ENCODE measurements at regions of chr22 and their contacts with region 1.

Region 1: DNA sequence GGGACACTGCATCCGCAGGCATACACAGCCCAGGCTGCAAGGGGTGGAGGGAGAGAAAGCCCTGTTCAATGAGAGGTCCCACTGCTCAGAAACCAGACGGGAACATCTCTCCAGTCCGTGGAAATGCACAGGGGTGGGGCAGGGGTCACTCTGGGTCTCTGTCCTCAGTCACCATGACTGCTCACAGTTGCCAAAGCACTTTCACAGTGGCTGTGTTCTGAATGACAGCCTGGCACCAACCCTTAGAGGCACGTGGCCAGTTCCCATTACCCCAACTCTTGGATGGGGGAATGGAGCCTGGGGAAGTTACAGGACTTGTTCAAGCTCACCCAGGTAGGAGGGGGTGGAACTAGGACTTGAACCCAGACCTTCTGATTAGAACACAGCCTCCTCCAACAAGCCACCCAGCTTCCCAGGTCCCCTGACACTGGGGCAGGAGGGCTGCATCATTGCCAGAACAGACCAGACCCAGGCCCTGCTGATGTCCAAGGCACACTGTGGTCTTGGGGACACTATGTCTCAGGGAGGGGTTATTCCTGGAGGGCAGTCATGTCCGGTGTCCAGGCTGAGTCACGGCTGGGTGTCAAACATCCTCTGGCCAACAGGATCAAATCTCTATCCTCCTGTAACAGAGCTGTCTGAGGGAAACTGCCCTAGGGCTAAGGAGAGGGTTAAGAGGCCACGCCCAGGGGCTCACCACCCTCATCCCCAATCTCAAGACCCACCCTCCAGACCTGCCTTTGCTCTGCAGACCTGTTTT is 8.2 kb downstream of the ZNF70 start:
- DNase-seq: peak in 3 of 5 donors; percentile 49 to 68 (median 64)
- ATAC-seq: peak; percentile 83 to 94 (median 92)
- H3K4me3 ChIP-seq: no peak overlapping the region
- H3K27ac ChIP-seq: peak overlapping the region in 4 of 12 donors; percentile 24 to 37 (median 30)
- H3K4me1 ChIP-seq: peaks cover 0 to 17% (median 7%) of the 10 kb centered on the region in 12 donors
- H3K27me3 ChIP-seq: no peaks in the 10 kb centered on the region
- CTCF ChIP-seq: no peak
- POLR2A ChIP-seq: no peak

Region 2: DNA sequence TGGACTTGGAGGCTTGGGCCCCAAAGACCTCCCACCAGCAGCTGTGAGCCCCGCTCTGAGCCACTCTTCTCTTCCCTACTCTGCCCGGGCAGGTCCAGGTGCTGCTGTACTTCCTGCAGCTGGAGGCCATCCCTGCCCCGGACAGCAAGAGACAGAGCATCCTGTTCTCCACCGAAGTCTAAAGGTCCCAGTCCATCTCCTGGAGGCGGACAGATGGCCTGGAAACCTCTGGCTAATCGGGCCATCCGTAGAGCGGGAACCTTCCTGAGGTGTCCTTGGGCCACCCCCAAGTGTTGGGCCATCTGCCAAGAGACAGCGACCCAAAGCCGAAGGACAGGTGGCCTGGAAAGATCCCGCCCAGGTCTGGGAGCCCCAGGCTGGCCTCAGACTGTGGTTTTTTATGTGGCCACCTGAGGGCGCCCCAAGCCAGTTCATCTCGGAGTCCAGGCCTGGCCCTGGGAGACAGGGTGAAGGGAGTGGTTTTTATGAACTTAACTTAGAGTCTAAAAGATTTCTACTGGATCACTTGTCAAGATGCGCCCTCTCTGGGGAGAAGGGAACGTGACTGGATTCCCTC is 427.3 kb before region 1 on chr22:
- intact Hi-C with region 1: no loop called
- DNase-seq: peak; percentile 32 to 82 (median 69)
- ATAC-seq: peak in 2 of 4 donors; percentile 24 to 34
- H3K4me3 ChIP-seq: no peak overlapping the region
- H3K27ac ChIP-seq: no peak overlapping the region
- H3K4me1 ChIP-seq: peaks cover 0 to 3% (median 0%) of the 10 kb centered on the region in 12 donors
- H3K27me3 ChIP-seq: no peaks in the 10 kb centered on the region
- CTCF ChIP-seq: peak; percentile 30 to 86 (median 66)
- POLR2A ChIP-seq: no peak

Region 3: GRCh38 chr22:23685205-23685784 is 57.4 kb before region 1 on chr22:
- intact Hi-C with region 1: loop called in 1 of 10 experiments (anchors 5 kb)
- DNase-seq: peak in 1 of 5 donors; percentile 44
- ATAC-seq: peak in 3 of 4 donors; percentile 64 to 71 (median 66)
- H3K4me3 ChIP-seq: no peak overlapping the region
- H3K27ac ChIP-seq: peak overlapping the region in 1 of 12 donors; percentile 69
- H3K4me1 ChIP-seq: peaks cover 0 to 33% (median 21%) of the 10 kb centered on the region in 12 donors
- H3K27me3 ChIP-seq: no peaks in the 10 kb centered on the region
- CTCF ChIP-seq: no peak
- POLR2A ChIP-seq: no peak